Ovary (tissue), 10 donors: ENCODE measurements at regions of chr14 and their contacts with region 1.

Region 1: DNA sequence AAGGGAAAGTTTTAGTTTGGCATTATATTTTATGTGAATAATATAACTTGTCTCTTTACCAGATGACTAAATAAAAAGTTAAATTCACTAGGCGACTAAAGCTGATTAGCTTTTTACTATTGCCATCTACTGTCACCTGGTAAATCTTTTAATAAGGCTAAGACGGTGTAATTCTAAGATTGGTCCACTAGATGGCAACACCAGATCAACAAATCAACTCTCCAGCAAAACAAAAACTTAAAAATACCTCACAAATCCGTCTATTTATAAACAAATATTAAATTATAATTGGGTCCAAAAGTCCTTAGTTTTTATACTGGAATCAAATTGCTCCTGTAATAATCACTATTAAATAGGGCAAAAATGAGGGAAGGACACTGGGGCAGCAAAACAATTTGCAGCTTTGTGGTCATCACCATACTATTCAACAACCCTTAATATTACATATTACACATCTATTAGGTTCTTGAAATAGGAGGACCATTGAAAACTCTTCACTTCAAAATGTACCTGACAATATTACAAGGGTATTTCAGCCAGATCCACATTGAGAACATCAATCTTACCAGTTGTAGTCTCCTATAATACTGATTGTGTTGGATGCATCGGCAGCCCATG is 47.9 kb downstream of the GALC start:
- DNase-seq: no peak
- H3K4me3 ChIP-seq: no peak overlapping the region
- H3K27ac ChIP-seq: no peak overlapping the region
- H3K4me1 ChIP-seq: no peaks in the 10 kb centered on the region
- H3K27me3 ChIP-seq: no peaks in the 10 kb centered on the region
- CTCF ChIP-seq: peak; percentile 40 to 63 (median 60)
- EP300 ChIP-seq: no peak
- POLR2A ChIP-seq: no peak

Region 2: GRCh38 chr14:88236421-88236820 is 291.3 kb after region 1 on chr14:
- intact Hi-C with region 1: loop called in 1 of 4 experiments (anchors 2 kb)
- DNase-seq: no peak
- H3K4me3 ChIP-seq: no peak overlapping the region
- H3K27ac ChIP-seq: no peak overlapping the region
- H3K4me1 ChIP-seq: no peaks in the 10 kb centered on the region
- H3K27me3 ChIP-seq: no peaks in the 10 kb centered on the region
- CTCF ChIP-seq: no peak
- EP300 ChIP-seq: no peak
- POLR2A ChIP-seq: no peak

Region 3: GRCh38 chr14:88955455-88955854 is 1010.4 kb after region 1 on chr14:
- intact Hi-C with region 1: no loop called
- DNase-seq: no peak
- H3K4me3 ChIP-seq: no peak overlapping the region
- H3K27ac ChIP-seq: no peak overlapping the region
- H3K4me1 ChIP-seq: peaks cover 4% of the 10 kb centered on the region
- H3K27me3 ChIP-seq: no peaks in the 10 kb centered on the region
- CTCF ChIP-seq: no peak
- EP300 ChIP-seq: no peak
- POLR2A ChIP-seq: no peak